SK-N-SH (cell line): ENCODE measurements at regions of chr10 and their contacts with region 1.

Region 1: DNA sequence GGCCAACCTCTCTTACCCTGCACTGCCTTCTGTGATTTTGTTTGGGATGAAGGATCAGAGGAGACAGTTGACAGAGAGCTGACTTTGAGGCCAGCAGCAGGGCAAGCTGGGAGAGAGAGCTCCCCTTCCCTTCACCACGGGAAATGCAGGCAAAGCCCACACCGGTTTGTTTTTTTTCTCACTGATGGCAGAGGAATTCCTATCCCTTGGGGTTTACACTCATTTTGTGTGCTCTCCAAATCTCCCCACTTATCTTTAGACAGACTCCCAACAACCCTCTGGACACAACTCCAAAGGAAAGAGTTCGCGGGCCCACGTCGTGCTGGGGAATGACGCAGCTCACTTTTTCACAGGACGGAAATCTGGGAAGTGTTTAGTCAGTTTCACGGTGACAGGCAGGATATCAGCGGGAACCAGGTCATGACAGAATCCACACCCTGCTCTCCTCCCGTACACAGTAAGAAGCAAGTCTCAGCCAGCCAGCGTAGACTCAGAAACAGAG is 68.3 kb upstream of the FAM171A1 start:
- DNase-seq: peak; percentile 51
- H3K4me3 ChIP-seq: peak overlapping the region; percentile 24 to 28
- H3K27ac ChIP-seq: no peak overlapping the region
- H3K4me1 ChIP-seq: peaks cover 0 to 5% of the 10 kb centered on the region in 2 experiments; a peak in 1 of 4 replicates
- H3K27me3 ChIP-seq: no peaks in the 10 kb centered on the region
- CTCF ChIP-seq: peak; percentile 35; the same call in 1 of the 2 replicates
- EP300 ChIP-seq: no peak
- RAD21 ChIP-seq: no peak

Region 2: GRCh38 chr10:15419279-15419874 is 20.0 kb before region 1 on chr10:
- CTCF ChIA-PET with region 1: interaction called, 15 read pairs
- POLR2A ChIA-PET with region 1: no interaction called
- DNase-seq: peak; percentile 47
- H3K4me3 ChIP-seq: no peak overlapping the region
- H3K27ac ChIP-seq: no peak overlapping the region
- H3K4me1 ChIP-seq: no peaks in the 10 kb centered on the region
- H3K27me3 ChIP-seq: no peaks in the 10 kb centered on the region
- CTCF ChIP-seq: peak; percentile 90
- EP300 ChIP-seq: no peak
- RAD21 ChIP-seq: peak; percentile 42

Region 3: GRCh38 chr10:15427843-15428414 is 11.5 kb before region 1 on chr10:
- CTCF ChIA-PET with region 1: interaction called, 10 read pairs
- POLR2A ChIA-PET with region 1: no interaction called
- DNase-seq: peak; percentile 58
- H3K4me3 ChIP-seq: no peak overlapping the region; a peak in 1 of 4 replicates
- H3K27ac ChIP-seq: no peak overlapping the region
- H3K4me1 ChIP-seq: no peaks in the 10 kb centered on the region
- H3K27me3 ChIP-seq: no peaks in the 10 kb centered on the region; the same call in 1 of the 2 replicates
- CTCF ChIP-seq: peak; percentile 73
- EP300 ChIP-seq: no peak
- RAD21 ChIP-seq: peak; percentile 79

Region 4: GRCh38 chr10:15763006-15763405 is 323.6 kb after region 1 on chr10:
- CTCF ChIA-PET with region 1: no interaction called
- POLR2A ChIA-PET with region 1: no interaction called
- DNase-seq: no peak
- H3K4me3 ChIP-seq: no peak overlapping the region
- H3K27ac ChIP-seq: no peak overlapping the region
- H3K4me1 ChIP-seq: no peaks in the 10 kb centered on the region
- H3K27me3 ChIP-seq: no peaks in the 10 kb centered on the region; the same call in 1 of the 2 replicates
- CTCF ChIP-seq: no peak
- EP300 ChIP-seq: no peak
- RAD21 ChIP-seq: no peak